PC-9 (cell line): ENCODE measurements at regions of chr11 and their contacts with region 1.

Region 1: GRCh38 chr11:99901175-99901574 is 785.9 kb upstream of the ARHGAP42 start:
- DNase-seq: no peak
- H3K4me3 ChIP-seq: no peak overlapping the region
- H3K27ac ChIP-seq: no peak overlapping the region
- H3K4me1 ChIP-seq: no peaks in the 10 kb centered on the region
- H3K27me3 ChIP-seq: no peaks in the 10 kb centered on the region
- CTCF ChIP-seq: no peak

Region 2: GRCh38 chr11:99759787-99760186 is 141.4 kb before region 1 on chr11:
- CTCF ChIA-PET with region 1: no interaction called
- POLR2A ChIA-PET with region 1: no interaction called
- intact Hi-C with region 1: no loop called
- DNase-seq: no peak
- H3K4me3 ChIP-seq: no peak overlapping the region
- H3K27ac ChIP-seq: no peak overlapping the region
- H3K4me1 ChIP-seq: no peaks in the 10 kb centered on the region
- H3K27me3 ChIP-seq: no peaks in the 10 kb centered on the region
- CTCF ChIP-seq: no peak

Region 3: GRCh38 chr11:100908746-100909145 is 1007.6 kb after region 1 on chr11:
- CTCF ChIA-PET with region 1: interaction called, 12 read pairs
- POLR2A ChIA-PET with region 1: no interaction called
- intact Hi-C with region 1: no loop called
- DNase-seq: no peak
- H3K4me3 ChIP-seq: no peak overlapping the region
- H3K27ac ChIP-seq: no peak overlapping the region
- H3K4me1 ChIP-seq: no peaks in the 10 kb centered on the region
- H3K27me3 ChIP-seq: no peaks in the 10 kb centered on the region
- CTCF ChIP-seq: no peak